BJ (cell line): ENCODE measurements at regions of chr6 and their contacts with region 1.

Region 1: DNA sequence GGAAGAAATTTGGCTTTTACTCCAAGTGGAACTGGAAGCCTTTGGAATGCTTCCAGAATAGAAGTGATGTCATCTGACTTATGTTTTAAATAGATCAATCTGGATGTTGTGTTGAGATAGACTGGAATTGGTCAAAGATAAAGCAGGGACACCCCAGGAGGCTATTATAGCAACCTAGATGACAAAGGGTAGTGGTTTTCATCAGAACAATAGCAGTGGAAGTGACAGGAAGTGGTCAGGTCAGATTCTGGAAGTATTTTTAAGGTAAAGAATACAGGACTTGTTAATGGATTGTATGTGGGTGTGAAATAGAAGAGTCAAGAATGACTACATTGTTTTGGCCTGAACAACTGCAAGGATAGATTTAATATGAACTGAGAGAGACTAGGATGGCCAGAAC is 191.4 kb downstream of the ADGRB3 start:
- DNase-seq: no peak
- H3K4me3 ChIP-seq: no peak overlapping the region
- H3K27me3 ChIP-seq: no peaks in the 10 kb centered on the region
- CTCF ChIP-seq: no peak

Region 2: GRCh38 chr6:68740828-68741500 is 85.5 kb before region 1 on chr6:
- CTCF ChIA-PET with region 1: no interaction called
- POLR2A ChIA-PET with region 1: no interaction called
- DNase-seq: no peak
- H3K4me3 ChIP-seq: no peak overlapping the region
- H3K27me3 ChIP-seq: no peaks in the 10 kb centered on the region
- CTCF ChIP-seq: no peak

Region 3: GRCh38 chr6:69164564-69165229 is 338.2 kb after region 1 on chr6:
- CTCF ChIA-PET with region 1: no interaction called
- POLR2A ChIA-PET with region 1: interaction called, 15 read pairs
- DNase-seq: no peak
- H3K4me3 ChIP-seq: no peak overlapping the region
- H3K27me3 ChIP-seq: no peaks in the 10 kb centered on the region
- CTCF ChIP-seq: peak; percentile 32; the same call in 1 of the 2 replicates